Endothelial cell of umbilical vein (primary cell): ENCODE measurements at regions of chr6 and their contacts with region 1.

Region 1: DNA sequence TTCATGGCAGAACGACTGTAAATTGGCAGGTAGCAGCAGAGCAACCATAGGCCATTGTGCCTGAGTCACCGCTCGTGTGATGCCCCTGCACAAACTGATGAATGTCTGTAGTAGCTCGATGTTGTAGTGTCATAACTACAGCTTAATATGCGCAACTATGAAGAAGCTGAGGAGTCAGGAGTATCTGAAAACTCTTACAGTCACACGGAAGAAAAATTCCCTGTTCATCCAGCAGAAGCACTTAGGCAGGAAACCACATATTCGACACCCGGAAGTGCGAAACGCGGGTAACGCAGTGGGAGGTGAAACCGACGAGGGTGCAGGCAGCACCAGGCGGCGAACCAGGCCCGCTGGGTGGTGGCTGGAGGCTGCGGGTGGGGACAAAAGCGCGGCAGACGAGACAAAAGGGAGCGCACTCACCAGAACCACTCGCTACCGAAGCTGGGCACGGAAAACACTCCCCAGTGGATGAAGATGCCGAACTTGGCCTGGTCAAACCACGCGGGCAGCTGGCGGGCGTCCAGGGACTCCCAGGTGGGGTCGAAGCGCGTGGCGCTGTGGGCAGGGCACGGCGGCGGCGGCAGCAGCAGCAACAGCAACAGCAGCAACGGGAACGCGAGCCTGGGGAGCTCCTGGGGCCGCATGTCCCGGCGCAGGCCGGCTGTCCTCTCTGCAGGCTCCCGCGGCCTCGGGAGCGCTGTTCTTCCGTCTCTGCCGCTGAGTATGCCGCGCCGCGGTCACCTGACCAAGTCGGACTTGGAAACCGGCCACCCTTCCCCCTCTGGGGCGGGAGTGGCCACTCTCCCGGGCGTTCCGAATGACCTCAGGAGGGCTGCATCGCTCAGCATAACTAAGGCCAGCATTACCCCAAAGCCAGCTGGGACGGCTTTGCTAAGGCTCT is at the start of gene FUCA2:
- DNase-seq: peak; percentile 81
- H3K4me3 ChIP-seq: peak within 1 kb of the TSS; percentile 48 to 82 (median 53)
- H3K27ac ChIP-seq: peak within 1 kb of the TSS; percentile 69
- H3K4me1 ChIP-seq: peaks cover 18% of the 10 kb centered on the region
- H3K27me3 ChIP-seq: peaks cover 6 to 12% of the 10 kb centered on the region in 2 experiments
- CTCF ChIP-seq: peak in 1 of 2 donors; percentile 14
- POLR2A ChIP-seq: peak; percentile 88
- total RNA-seq, gene FUCA2: 80.9 and 85.0 TPM in 2 replicates

Region 2: DNA sequence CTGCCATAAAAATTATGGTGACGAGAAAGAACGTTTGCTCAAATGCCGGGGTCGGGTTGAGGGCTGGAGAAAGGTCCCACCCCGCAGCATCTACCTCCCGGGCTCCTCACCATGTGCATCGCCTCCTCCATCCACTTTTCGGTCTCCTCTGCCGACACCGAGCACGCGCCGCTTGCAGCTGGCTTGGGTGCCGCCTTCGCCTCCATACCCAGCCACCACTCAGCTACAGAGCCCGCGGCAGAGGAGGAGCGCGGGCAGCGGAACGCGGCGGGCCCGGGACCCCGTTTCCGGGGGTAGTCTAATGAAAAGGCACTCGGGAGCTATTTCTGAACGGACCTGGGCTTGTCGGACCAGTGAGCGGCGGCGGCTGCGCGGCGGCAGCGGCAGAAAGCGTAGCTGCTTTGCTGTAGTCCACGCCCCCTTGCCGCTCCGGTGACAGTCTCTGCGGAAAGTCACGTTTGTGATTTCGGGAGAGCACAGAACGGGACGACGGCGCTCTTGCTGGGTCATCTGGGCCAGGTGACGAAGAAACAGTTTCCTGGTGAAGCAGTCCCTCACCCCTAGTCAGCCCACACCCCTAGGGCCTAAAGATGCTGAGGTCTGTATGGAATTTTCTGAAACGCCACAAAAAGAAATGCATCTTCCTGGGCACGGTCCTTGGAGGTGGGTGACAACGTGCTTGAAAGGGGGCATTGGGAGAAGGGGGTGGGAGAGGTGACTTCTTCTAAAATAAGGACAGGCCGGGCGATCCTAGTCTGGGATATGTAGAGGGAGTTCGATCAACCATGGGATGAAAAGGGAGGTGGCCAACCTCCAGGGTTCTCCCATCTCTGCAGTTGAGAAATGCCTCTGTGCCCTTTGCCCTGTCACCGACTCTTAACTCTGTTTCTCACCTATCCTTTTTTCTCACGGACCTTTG is 60.5 kb before region 1 on chr6 and contains the starts of genes ADAT2 and PEX3:
- CTCF ChIA-PET with region 1: no interaction called
- POLR2A ChIA-PET with region 1: no interaction called
- dilution Hi-C with region 1: no loop called
- intact Hi-C with region 1: loop called (anchors 1 kb)
- DNase-seq: peak; percentile 94
- H3K4me3 ChIP-seq: peak within 1 kb of the TSS; percentile 52 to 90 (median 73)
- H3K27ac ChIP-seq: peak within 1 kb of the TSS; percentile 65
- H3K4me1 ChIP-seq: peaks cover 18% of the 10 kb centered on the region
- H3K27me3 ChIP-seq: no peaks in the 10 kb centered on the region
- CTCF ChIP-seq: no peak
- POLR2A ChIP-seq: peak; percentile 87
- total RNA-seq, gene ADAT2: 9.8 and 11.3 TPM in 2 replicates
- total RNA-seq, gene PEX3: 20.0 and 21.7 TPM in 2 replicates